Dorsolateral prefrontal cortex (tissue), 120 donors: ENCODE measurements at regions of chr12 and their contacts with region 1.

Region 1: GRCh38 chr12:7460375-7461259 is 16.7 kb upstream of the CD163L1 start:
- DNase-seq: peak in 6 of 10 donors; percentile 19 to 71 (median 60)
- H3K4me3 ChIP-seq: no peak overlapping the region
- H3K27ac ChIP-seq: no peak overlapping the region
- H3K27me3 ChIP-seq: peaks cover 0 to 4% (median 0%) of the 10 kb centered on the region in 45 donors
- CTCF ChIP-seq: peak; percentile 44 to 92 (median 78)

Region 2: GRCh38 chr12:7219599-7220243 is 240.9 kb before region 1 on chr12:
- intact Hi-C with region 1: loop called (anchors 1 to 5 kb)
- DNase-seq: peak; percentile 33 to 88 (median 62)
- H3K4me3 ChIP-seq: no peak overlapping the region
- H3K27ac ChIP-seq: no peak overlapping the region
- H3K27me3 ChIP-seq: no peaks in the 10 kb centered on the region
- CTCF ChIP-seq: peak; percentile 76 to 99 (median 95)